Posterior vena cava (tissue), 2 donors: ENCODE measurements at regions of chr1 and their contacts with region 1.

Region 1: GRCh38 chr1:220089650-220090556 is at the start of gene BPNT1:
- DNase-seq: peak; percentile 98
- total RNA-seq, gene BPNT1: 12.8 to 14.5 TPM

Region 2: DNA sequence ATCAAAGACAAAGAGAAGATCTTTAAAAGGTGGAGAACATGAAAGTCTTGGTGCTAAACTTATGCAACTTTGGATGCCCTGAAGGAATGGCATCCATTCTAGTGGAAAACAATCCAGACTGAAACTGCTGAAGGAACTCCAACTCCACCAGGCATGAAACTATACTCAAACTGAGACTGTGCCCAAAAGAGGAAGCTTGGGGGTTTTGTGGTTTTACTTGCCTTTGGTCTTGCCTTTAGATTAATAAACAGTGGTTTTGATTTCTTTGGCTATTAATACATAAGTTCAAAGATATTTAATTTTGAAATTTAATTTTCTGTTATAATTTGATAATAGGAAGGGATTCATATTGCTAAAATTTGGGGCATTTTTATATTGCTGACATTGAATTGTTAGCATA is 144.1 kb before region 1 on chr1:
- intact Hi-C with region 1: no loop called
- DNase-seq: no peak

Region 3: DNA sequence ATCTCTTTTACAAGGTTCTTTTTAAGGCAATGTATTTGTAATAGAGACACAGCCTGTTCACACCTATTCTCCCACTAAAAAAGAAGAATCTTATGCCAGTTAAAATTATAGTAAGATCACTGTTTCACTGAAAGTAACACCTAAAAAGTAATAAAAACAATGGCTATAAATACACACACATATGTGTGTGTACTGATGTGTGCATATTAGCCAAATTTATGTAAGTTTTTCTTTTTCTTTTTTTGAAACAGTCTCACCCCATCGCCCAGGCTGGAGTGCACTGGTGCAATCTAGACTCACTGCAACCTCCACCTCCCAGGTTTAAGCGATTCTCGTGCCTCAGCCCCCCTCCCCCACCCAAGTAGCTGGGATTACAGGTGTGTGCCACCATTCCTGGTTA is 104.7 kb before region 1 on chr1:
- intact Hi-C with region 1: no loop called
- DNase-seq: no peak

Region 4: GRCh38 chr1:220031287-220031686 is 58.6 kb before region 1 on chr1:
- intact Hi-C with region 1: loop called in 1 of 2 experiments (anchors 10 kb)
- DNase-seq: no peak

Region 5: GRCh38 chr1:220046052-220046930 is 43.6 kb before region 1 on chr1 and contains the start of gene EPRS1:
- intact Hi-C with region 1: loop called in 1 of 2 experiments (anchors 5 kb)
- DNase-seq: peak; percentile 97
- total RNA-seq, gene EPRS1: 77.7 to 90.1 TPM

Region 6: GRCh38 chr1:220498188-220498587 is 408.3 kb after region 1 on chr1:
- intact Hi-C with region 1: no loop called
- DNase-seq: no peak

Region 7: DNA sequence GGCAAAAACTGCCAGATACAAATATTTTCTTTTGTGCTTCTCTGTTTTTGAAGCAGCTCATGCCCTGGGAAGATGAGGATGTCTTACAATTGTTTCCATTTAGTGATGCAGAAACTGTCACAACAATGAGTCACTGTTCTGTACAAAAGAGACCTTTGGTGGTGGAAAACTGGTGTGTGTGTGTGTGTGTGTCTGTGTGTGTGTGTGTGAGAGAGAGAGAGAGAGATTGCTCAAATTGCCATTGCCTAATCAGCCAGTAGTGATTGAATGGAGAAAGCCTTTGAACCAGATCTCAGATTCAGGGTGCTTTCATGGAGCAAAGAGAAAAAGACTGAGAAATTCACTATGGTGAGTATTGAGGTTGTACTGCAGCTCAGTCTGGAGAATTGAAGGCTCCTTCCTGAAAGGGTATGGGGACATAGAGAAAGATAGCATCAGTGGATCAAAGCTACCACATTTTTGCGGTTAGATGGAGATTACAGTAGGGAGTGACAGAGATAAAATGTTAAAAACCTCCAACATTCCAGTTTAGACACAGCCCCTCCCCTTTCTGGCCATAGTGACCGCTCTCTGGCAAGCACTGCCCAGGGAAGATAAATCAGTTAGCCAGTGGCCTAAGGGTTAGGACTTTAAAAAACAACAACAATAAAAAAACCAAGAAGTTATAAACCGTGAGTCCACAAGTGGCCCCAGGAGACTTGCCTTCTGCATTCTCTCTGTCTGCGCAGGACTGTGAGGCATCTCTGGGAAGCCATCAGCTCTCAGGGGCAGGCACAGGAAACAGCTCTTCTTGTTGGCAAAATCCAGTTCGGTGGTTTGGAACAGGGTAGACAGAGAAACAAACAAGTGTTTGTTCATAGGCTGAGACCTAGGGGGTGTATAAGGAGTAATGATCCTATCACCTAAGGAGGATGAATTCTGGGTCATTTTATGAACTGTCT is 1245.5 kb after region 1 on chr1:
- intact Hi-C with region 1: no loop called
- DNase-seq: peak; percentile 81